Activated T-helper 2 cell treated with anti-CD3 and anti-CD28 coated beads, Interferon-gamma antibody, Interleukin-2, Interleukin-4, amounts not matched to agents 10 μg/mL and 5 μg/mL and 100 μg/mL, durations not matched to agents 14 hours and 24 hours and 36 hours (primary cell): ENCODE measurements at regions of chr3 and their contacts with region 1.

Region 1: DNA sequence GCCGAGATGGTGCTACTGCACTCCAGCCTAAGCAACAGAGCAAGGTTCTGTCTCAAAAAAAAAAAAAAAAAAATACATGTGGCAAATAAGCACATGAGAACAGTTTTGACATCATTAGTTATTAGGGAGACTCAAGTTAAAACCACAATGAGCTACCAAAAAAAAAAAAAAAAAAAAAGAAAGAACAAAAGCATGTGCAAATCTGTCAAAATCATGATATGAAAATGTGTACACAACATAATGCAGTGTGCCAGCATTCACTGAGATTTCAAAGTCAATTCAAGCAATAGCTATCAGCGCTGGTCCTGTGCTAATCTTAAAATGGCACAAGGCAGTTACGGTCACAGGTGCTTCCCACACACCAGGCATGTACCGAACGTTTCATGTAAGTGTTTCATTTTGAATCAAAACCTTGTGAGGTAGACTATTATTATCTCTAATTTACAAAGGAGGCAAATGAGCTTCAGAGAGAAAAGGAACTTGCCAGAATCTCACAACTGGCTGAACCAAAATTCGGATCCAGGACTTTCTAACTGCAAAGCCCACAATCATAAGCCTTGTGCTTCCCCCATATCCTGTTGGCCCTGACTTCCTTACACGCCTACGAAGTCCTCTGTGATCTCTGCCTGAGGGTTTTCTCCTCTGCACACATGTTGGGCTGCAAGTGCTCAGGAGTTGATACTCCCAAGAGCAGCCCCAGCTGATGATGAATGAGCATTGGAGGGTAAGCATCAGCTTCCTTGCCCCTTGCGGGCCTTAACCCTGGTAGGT is 200.1 kb upstream of the PROK2 start:
- DNase-seq: no peak
- H3K4me3 Mint-ChIP-seq: peak overlapping the region; percentile 49
- H3K27ac Mint-ChIP-seq: peak overlapping the region; percentile 74
- H3K4me1 Mint-ChIP-seq: peaks cover 45% of the 10 kb centered on the region
- H3K27me3 Mint-ChIP-seq: no peaks in the 10 kb centered on the region

Region 2: GRCh38 chr3:71998995-71999673 is 14.1 kb after region 1 on chr3:
- intact Hi-C with region 1: loop called (anchors 2 kb)
- DNase-seq: no peak
- H3K4me3 Mint-ChIP-seq: no peak overlapping the region
- H3K27ac Mint-ChIP-seq: peak overlapping the region; percentile 69
- H3K4me1 Mint-ChIP-seq: peaks cover 24% of the 10 kb centered on the region
- H3K27me3 Mint-ChIP-seq: peaks cover 2% of the 10 kb centered on the region

Region 3: GRCh38 chr3:72100601-72101187 is 115.7 kb after region 1 on chr3:
- intact Hi-C with region 1: loop called (anchors 5 kb)
- DNase-seq: peak; percentile 87
- H3K4me3 Mint-ChIP-seq: peak overlapping the region; percentile 76
- H3K27ac Mint-ChIP-seq: peak overlapping the region; percentile 77
- H3K4me1 Mint-ChIP-seq: peaks cover 25% of the 10 kb centered on the region
- H3K27me3 Mint-ChIP-seq: peaks cover 14% of the 10 kb centered on the region

Region 4: GRCh38 chr3:72347819-72348319 is 362.8 kb after region 1 on chr3:
- intact Hi-C with region 1: loop called (anchors 10 kb)
- DNase-seq: no peak
- H3K4me3 Mint-ChIP-seq: no peak overlapping the region
- H3K27ac Mint-ChIP-seq: no peak overlapping the region
- H3K4me1 Mint-ChIP-seq: peaks cover 54% of the 10 kb centered on the region
- H3K27me3 Mint-ChIP-seq: no peaks in the 10 kb centered on the region